ENCODE measurements at regions of chr19 and their contacts with region 1.

Region 1: DNA sequence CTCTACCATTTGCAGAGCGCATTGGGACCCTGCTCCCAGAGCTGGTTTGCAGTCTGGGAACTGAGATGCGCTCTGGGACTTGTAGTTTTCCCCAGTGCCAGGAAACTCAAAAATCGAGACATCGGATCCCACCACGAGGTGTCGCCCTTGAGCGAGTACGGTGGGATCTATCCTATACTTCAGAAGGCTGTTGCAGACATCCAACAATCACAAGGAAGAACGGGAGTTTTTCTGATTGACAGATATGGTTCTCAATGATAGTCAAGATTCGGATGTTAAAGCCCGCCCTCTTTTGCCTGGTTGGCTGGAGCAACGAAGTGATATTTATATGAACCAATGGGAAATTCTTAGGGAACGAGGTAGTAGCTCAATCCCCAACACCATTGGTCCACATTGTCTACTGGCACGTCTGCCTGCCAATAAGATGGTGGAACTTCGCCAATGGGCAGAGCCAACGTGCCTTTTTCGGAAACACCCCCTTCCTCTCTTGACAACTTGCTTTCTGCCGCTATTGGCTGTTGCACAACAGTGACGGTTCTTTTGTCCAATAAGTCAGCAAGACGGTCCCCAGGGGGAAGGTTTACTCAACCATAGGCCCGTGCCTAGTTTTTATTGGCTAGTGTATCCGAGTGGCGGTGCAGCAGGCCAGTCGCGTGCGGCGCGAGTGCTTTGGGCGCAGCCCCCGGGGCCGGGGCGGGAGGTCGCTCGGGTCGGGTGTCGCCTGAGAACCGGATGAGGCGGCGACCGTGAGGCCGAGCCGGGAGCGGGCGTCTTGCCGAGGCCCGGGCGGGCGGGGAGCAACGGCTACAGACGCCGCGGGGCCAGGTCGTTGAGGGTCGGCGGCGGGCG is at the start of gene DNM2:
- DNase-seq: peak; percentile 100
- H3K4me3 ChIP-seq: peak within 1 kb of the TSS; percentile 88 to 96 (median 89)
- H3K4me3 Mint-ChIP-seq: peak within 1 kb of the TSS; percentile 98
- H3K27ac ChIP-seq: peak within 1 kb of the TSS; percentile 39 to 89
- H3K27ac Mint-ChIP-seq: peak within 1 kb of the TSS; percentile 85 to 97 (median 92)
- H3K4me1 ChIP-seq: peaks cover 27 to 28% of the 10 kb centered on the region in 2 donors
- H3K4me1 Mint-ChIP-seq: peaks cover 25% of the 10 kb centered on the region
- H3K27me3 ChIP-seq: no peaks in the 10 kb centered on the region
- H3K27me3 Mint-ChIP-seq: no peaks in the 10 kb centered on the region
- CTCF ChIP-seq: peak; percentile 77
- polyA plus RNA-seq, gene DNM2: 53.0 to 186 (median 69.5) TPM

Region 2: GRCh38 chr19:10760273-10760944 is 42.8 kb after region 1 on chr19:
- intact Hi-C with region 1: loop called (anchors 5 kb)
- DNase-seq: peak in 2 of 3 donors; percentile 45 to 50
- H3K4me3 ChIP-seq: peak overlapping the region in 1 of 3 experiments; percentile 54
- H3K4me3 Mint-ChIP-seq: peak overlapping the region in 1 of 2 donors; percentile 56
- H3K27ac ChIP-seq: peak overlapping the region; percentile 66 to 83
- H3K27ac Mint-ChIP-seq: peak overlapping the region; percentile 89 to 98 (median 95)
- H3K4me1 ChIP-seq: peaks cover 46 to 57% of the 10 kb centered on the region in 2 donors
- H3K4me1 Mint-ChIP-seq: peaks cover 61% of the 10 kb centered on the region
- H3K27me3 ChIP-seq: no peaks in the 10 kb centered on the region
- H3K27me3 Mint-ChIP-seq: no peaks in the 10 kb centered on the region
- CTCF ChIP-seq: no peak

Region 3: GRCh38 chr19:10780368-10780767 is 62.8 kb after region 1 on chr19:
- intact Hi-C with region 1: loop called in 1 of 2 experiments (anchors 5 kb)
- DNase-seq: peak; percentile 91 to 98 (median 97)
- H3K4me3 ChIP-seq: peak overlapping the region in 1 of 3 experiments; percentile 33
- H3K4me3 Mint-ChIP-seq: peak overlapping the region in 1 of 2 donors; percentile 39
- H3K27ac ChIP-seq: peak overlapping the region; percentile 86 to 92
- H3K27ac Mint-ChIP-seq: peak overlapping the region; percentile 91 to 98 (median 97)
- H3K4me1 ChIP-seq: peaks cover 80 to 94% of the 10 kb centered on the region in 2 donors
- H3K4me1 Mint-ChIP-seq: peaks cover 70% of the 10 kb centered on the region
- H3K27me3 ChIP-seq: no peaks in the 10 kb centered on the region
- H3K27me3 Mint-ChIP-seq: no peaks in the 10 kb centered on the region
- CTCF ChIP-seq: no peak

Region 4: DNA sequence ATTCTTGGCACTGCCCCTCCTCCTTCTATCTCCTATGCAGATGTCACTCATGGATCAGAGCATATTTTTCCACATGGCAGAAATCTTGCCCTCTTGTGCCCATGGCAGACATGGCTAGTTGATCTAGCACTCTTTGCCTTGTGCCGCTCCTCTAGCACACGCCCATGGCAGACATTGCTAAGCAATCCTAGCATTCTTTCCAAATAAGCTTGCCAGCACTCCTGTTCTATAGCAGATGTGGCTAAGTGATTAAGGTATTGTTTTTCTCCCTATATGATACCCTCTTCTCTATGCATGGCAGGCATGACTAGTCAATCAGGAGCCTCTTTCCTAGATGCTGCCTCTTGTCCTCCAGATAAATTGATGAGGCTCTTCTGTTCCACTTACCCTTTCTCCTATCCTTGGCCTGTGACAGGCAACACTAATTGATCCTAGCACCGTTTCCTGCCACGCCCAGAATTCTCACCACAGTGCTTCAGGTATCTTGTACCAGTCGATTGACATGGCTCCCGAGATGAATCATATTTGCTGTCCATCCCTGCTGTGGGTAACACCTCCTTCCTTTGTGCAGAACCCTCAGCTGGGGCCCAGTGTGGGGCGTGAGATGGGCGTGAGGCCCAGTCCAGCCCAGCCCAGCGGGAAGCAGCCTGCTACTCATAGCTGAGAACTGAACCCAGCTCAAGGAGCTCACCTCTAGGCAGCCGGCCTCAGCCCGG is 91.5 kb after region 1 on chr19:
- intact Hi-C with region 1: loop called in 1 of 2 experiments (anchors 5 kb)
- DNase-seq: peak; percentile 33 to 46 (median 40)
- H3K4me3 ChIP-seq: peak overlapping the region in 1 of 3 experiments; percentile 49
- H3K4me3 Mint-ChIP-seq: peak overlapping the region; percentile 13 to 49
- H3K27ac ChIP-seq: peak overlapping the region; percentile 82 to 89
- H3K27ac Mint-ChIP-seq: peak overlapping the region; percentile 88 to 97 (median 94)
- H3K4me1 ChIP-seq: peaks cover 89 to 99% of the 10 kb centered on the region in 2 donors
- H3K4me1 Mint-ChIP-seq: peaks cover 82% of the 10 kb centered on the region
- H3K27me3 ChIP-seq: no peaks in the 10 kb centered on the region
- H3K27me3 Mint-ChIP-seq: no peaks in the 10 kb centered on the region
- CTCF ChIP-seq: no peak

Region 5: DNA sequence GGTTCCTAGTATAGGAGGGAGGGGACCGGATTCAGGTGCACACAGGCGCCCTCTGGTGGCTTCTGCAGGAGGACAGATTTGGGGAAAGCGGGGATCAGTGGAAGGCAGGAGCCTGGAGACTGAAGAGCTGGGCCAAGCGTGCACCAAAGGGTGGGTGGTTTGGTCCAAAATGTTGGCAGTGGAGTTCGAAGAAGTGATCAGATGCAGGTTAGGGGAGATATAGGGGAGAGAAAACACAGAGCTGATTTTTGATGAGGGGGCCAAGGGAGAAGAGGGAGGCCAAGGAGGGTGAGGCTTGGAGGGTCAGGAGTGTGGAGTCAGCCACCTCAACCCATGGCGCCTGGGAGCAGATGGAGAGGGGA is 146.9 kb after region 1 on chr19:
- intact Hi-C with region 1: loop called (anchors 2 to 5 kb)
- DNase-seq: peak; percentile 65 to 75 (median 74)
- H3K4me3 ChIP-seq: no peak overlapping the region
- H3K4me3 Mint-ChIP-seq: no peak overlapping the region
- H3K27ac ChIP-seq: peak overlapping the region; percentile 15 to 79
- H3K27ac Mint-ChIP-seq: peak overlapping the region; percentile 47 to 91 (median 85)
- H3K4me1 ChIP-seq: peaks cover 43 to 81% of the 10 kb centered on the region in 2 donors
- H3K4me1 Mint-ChIP-seq: peaks cover 53% of the 10 kb centered on the region
- H3K27me3 ChIP-seq: no peaks in the 10 kb centered on the region
- H3K27me3 Mint-ChIP-seq: peaks cover 0 to 2% (median 0%) of the 10 kb centered on the region in 3 donors
- CTCF ChIP-seq: peak; percentile 93